Left cardiac atrium (tissue), 4 donors: ENCODE measurements at regions of chr2 and their contacts with region 1.

Region 1: GRCh38 chr2:172783091-172783898 is 47.6 kb downstream of the RAPGEF4 start:
- DNase-seq: no peak
- ATAC-seq: peak; percentile 73 to 82

Region 2: GRCh38 chr2:172704072-172704936 is 79.0 kb before region 1 on chr2:
- intact Hi-C with region 1: loop called in 1 of 2 experiments (anchors 10 kb)
- DNase-seq: no peak
- ATAC-seq: peak in 1 of 2 donors; percentile 39